ENCODE measurements at regions of chr12 and their contacts with region 1.

Region 1: DNA sequence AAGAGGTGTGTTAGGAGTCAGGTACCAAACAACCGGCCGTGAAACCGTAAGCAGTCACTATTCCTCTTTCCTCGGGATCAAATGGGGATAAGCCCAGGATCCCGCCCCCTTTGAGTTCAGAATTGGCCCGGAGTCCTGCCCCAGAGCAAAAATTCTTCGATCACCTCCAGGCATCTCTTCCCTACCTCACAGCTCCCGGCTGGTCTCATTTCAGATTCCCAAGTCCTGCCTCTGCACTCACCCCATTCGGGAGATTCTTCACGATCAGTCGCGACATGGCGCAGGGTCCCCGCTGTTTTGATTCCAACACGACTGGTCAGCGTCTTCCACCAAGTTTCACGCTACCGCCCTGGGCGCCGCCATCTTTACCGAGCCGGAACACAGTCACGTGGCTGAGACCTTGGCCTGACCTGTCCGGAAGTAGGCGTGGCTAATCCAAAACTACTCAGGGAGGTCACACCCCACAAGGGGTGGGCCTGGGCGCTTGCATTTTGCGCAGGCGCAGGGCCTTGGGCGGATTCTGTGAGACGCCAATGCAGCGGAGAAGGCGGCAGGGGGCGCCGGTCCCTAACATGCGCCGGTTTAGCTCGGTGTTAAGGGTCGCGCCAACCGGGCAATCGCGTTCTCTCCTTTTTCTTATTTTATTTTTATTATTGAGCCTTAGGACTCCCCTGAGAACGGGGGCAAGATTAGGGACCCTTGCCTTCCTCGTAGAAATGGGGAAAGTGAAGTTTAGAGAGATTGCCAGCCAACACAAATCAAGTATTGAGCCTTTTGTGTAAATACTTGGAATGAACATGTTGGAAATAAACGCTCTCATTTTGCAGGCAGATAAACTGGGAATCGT is at the start of gene RBM19:
- DNase-seq: peak; percentile 99
- H3K4me3 Mint-ChIP-seq: peak within 1 kb of the TSS; percentile 93
- H3K27ac Mint-ChIP-seq: peak within 1 kb of the TSS; percentile 98
- H3K4me1 Mint-ChIP-seq: peaks cover 54% of the 10 kb centered on the region
- H3K27me3 Mint-ChIP-seq: peaks cover 2% of the 10 kb centered on the region
- total RNA-seq, gene RBM19: 36.0 to 39.0 TPM

Region 2: DNA sequence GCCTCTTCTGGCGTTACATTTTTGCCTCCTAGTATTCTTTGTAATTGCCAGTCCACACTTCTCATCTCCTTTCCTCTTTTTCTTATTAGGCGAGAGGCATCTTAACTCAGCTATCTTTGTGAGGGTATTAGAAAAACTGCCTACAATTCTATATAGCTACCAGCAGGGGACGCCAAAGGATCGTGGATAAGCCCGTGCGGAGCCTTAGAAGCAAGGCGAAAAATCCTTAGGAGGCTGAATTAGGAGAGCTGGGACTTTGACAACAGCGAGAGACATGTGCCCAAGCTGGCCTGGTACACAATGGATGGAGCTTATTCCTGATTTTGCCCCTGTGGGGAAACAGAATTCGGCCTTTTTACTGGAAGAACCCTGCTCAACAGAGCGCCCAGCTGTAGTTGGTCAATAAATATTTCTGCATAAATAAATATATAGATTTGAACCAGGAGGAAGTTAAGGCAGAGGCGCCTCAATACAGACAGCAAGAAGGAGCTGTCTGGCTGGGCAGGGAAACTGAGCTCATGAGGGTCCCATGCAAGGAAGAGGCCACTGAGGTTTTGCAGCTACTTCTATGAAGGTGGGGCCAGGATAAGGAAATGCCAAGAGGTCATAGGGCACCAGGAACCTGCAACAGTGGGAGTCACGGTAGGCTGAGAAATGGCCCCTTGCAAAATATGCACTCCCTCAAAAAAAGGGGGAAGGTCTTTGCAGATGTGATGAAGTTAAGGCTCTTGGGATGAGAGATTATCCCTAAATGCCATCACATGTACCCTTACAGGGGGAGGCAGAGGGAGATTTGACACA is 14.6 kb after region 1 on chr12:
- CTCF ChIA-PET with region 1: interaction called, 18 read pairs
- POLR2A ChIA-PET with region 1: interaction called, 3 read pairs
- DNase-seq: peak; percentile 28
- H3K4me3 Mint-ChIP-seq: no peak overlapping the region
- H3K27ac Mint-ChIP-seq: no peak overlapping the region
- H3K4me1 Mint-ChIP-seq: no peaks in the 10 kb centered on the region
- H3K27me3 Mint-ChIP-seq: no peaks in the 10 kb centered on the region